SK-N-SH (cell line): ENCODE measurements at regions of chr14 and their contacts with region 1.

Region 1: GRCh38 chr14:105300792-105301533 is at the start of gene BRF1:
- DNase-seq: peak; percentile 99
- H3K4me3 ChIP-seq: peak within 1 kb of the TSS; percentile 68 to 85
- H3K27ac ChIP-seq: peak within 1 kb of the TSS; percentile 90 to 92
- H3K4me1 ChIP-seq: peaks cover 0 to 3% of the 10 kb centered on the region in 2 experiments; a peak in 1 of 4 replicates
- H3K27me3 ChIP-seq: no peaks in the 10 kb centered on the region
- CTCF ChIP-seq: no peak
- EP300 ChIP-seq: no peak; a peak in 1 of 4 replicates
- RAD21 ChIP-seq: no peak; the same call in 1 of the 2 replicates
- polyA plus RNA-seq, gene BRF1: 10.2 and 15.7 TPM in 2 replicates

Region 2: GRCh38 chr14:105314287-105315200 is 13.6 kb after region 1 on chr14 and contains the start of gene PACS2:
- CTCF ChIA-PET with region 1: interaction called, 5 read pairs
- POLR2A ChIA-PET with region 1: interaction called, 17 read pairs
- DNase-seq: peak; percentile 98
- H3K4me3 ChIP-seq: peak within 1 kb of the TSS; percentile 76 to 85
- H3K27ac ChIP-seq: peak within 1 kb of the TSS; percentile 40 to 88; a peak in 3 of 4 replicates
- H3K4me1 ChIP-seq: peaks cover 0 to 25% of the 10 kb centered on the region in 2 experiments; a peak in 1 of 4 replicates
- H3K27me3 ChIP-seq: no peaks in the 10 kb centered on the region
- CTCF ChIP-seq: no peak
- EP300 ChIP-seq: no peak
- RAD21 ChIP-seq: no peak
- polyA plus RNA-seq, gene PACS2: 27.4 and 42.7 TPM in 2 replicates